Activated CD4-positive, alpha-beta T cell treated with anti-CD3 and anti-CD28 coated beads for 36 hours (primary cell): ENCODE measurements at regions of chr14 and their contacts with region 1.

Region 1: GRCh38 chr14:28751467-28752058 is 15.0 kb upstream of the FOXG1 start:
- DNase-seq: peak; percentile 36
- ATAC-seq: no peak
- H3K4me3 Mint-ChIP-seq: no peak overlapping the region
- H3K27ac Mint-ChIP-seq: no peak overlapping the region
- H3K4me1 Mint-ChIP-seq: no peaks in the 10 kb centered on the region
- H3K27me3 Mint-ChIP-seq: peaks cover 27% of the 10 kb centered on the region

Region 2: GRCh38 chr14:28731358-28731757 is 20.2 kb before region 1 on chr14:
- CTCF ChIA-PET with region 1: no interaction called
- POLR2A ChIA-PET with region 1: no interaction called
- intact Hi-C with region 1: no loop called
- DNase-seq: no peak
- ATAC-seq: no peak
- H3K4me3 Mint-ChIP-seq: no peak overlapping the region
- H3K27ac Mint-ChIP-seq: no peak overlapping the region
- H3K4me1 Mint-ChIP-seq: no peaks in the 10 kb centered on the region
- H3K27me3 Mint-ChIP-seq: no peaks in the 10 kb centered on the region

Region 3: DNA sequence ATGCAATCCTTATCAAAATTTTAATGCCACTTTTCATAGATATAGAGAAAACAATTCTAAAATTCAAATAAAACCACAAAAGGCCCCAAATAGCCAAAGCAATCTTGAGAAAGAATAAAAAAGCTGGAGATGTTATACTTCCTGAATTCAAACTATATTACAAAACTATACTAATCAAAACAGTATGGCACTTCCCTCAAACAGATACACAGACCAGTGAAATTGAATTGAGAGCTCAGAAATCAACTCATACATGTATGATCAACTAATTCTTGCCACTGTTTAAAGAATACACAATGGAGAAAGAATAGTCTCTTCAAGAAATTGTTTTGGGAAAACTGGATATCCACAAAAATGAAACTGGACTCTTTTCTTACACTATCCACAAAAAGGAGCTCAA is 70.4 kb after region 1 on chr14:
- CTCF ChIA-PET with region 1: no interaction called
- POLR2A ChIA-PET with region 1: no interaction called
- intact Hi-C with region 1: no loop called
- DNase-seq: no peak
- ATAC-seq: no peak
- H3K4me3 Mint-ChIP-seq: no peak overlapping the region
- H3K27ac Mint-ChIP-seq: no peak overlapping the region
- H3K4me1 Mint-ChIP-seq: no peaks in the 10 kb centered on the region
- H3K27me3 Mint-ChIP-seq: no peaks in the 10 kb centered on the region

Region 4: GRCh38 chr14:29536886-29537511 is 785.4 kb after region 1 on chr14:
- CTCF ChIA-PET with region 1: no interaction called
- POLR2A ChIA-PET with region 1: no interaction called
- intact Hi-C with region 1: loop called (anchors 1 to 5 kb)
- DNase-seq: no peak
- ATAC-seq: no peak
- H3K4me3 Mint-ChIP-seq: no peak overlapping the region
- H3K27ac Mint-ChIP-seq: no peak overlapping the region
- H3K4me1 Mint-ChIP-seq: no peaks in the 10 kb centered on the region
- H3K27me3 Mint-ChIP-seq: no peaks in the 10 kb centered on the region

Region 5: GRCh38 chr14:30005114-30005808 is 1253.7 kb after region 1 on chr14:
- CTCF ChIA-PET with region 1: no interaction called
- POLR2A ChIA-PET with region 1: no interaction called
- intact Hi-C with region 1: loop called in 1 of 2 experiments (anchors 10 kb)
- DNase-seq: no peak
- ATAC-seq: no peak
- H3K4me3 Mint-ChIP-seq: no peak overlapping the region
- H3K27ac Mint-ChIP-seq: no peak overlapping the region
- H3K4me1 Mint-ChIP-seq: no peaks in the 10 kb centered on the region
- H3K27me3 Mint-ChIP-seq: no peaks in the 10 kb centered on the region